ENCODE measurements at regions of chr9 and their contacts with region 1.

Region 1: DNA sequence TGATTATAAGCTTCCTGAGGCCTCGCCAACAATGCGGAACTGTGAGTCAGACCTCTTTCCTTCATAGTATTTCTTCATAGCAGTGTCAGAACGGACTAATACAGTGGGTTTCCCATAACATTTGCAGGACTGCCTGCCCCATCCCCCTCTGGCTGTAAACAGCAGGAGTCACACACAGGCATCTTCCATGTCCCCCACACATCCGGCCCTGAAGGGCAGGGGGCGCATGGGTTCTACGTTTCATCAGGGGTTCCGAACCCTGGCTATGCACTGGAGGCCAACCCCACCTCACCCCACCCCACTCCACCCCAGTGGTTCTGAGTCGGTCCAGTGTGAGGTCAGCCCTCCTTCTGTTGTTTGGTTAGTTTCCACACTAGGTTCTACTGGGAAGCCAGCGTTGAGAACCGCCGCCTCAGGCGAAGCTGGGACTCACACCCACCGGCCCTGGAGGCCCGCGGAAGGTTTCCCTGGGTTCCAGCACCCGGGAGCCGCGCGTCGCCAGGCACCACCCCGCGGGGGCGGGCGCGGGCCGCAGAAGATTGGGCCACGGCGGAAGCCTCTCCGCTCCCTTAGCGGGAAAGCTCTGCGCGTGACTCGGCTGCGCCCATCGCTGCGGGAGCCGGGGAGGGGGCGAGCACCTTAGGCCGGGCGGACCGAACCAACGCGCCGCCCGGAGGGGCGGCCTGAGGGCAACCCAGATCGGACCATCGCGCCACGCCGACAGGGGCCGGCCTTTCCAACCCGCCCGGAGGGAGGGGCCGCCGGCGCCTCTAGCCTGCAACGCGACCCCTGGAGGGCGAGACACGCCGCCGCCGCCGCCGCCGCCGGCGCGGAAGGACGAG is at the start of gene RUSC2:
- DNase-seq: peak; percentile 84
- H3K4me3 ChIP-seq: peak within 1 kb of the TSS; percentile 89
- H3K27ac ChIP-seq: peak within 1 kb of the TSS; percentile 95
- H3K27me3 ChIP-seq: no peaks in the 10 kb centered on the region
- CTCF ChIP-seq: peak; percentile 53
- polyA plus RNA-seq, gene RUSC2: 17.4 and 19.3 TPM in 2 replicates

Region 2: DNA sequence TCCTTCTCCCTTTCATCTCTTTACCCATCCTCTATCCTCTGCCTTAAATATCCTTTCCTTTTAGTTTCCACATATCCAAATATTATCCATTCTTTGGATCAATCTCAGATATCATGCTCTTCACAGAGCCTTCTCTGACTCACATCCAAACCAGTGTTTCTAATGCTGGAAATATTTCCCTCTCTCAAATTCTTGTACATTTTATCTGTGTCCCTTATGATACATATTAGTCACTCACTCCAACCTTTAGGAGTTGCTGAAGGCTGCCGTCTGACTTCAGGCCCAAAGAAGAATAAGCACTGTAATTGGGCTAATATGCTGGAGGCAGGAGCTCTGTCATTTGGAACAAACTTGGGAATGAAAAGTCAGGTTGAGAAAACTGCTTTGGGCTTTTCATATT is 156.0 kb before region 1 on chr9:
- CTCF ChIA-PET with region 1: no interaction called
- POLR2A ChIA-PET with region 1: no interaction called
- DNase-seq: peak; percentile 41
- H3K4me3 ChIP-seq: no peak overlapping the region
- H3K27ac ChIP-seq: no peak overlapping the region
- H3K27me3 ChIP-seq: no peaks in the 10 kb centered on the region
- CTCF ChIP-seq: no peak

Region 3: DNA sequence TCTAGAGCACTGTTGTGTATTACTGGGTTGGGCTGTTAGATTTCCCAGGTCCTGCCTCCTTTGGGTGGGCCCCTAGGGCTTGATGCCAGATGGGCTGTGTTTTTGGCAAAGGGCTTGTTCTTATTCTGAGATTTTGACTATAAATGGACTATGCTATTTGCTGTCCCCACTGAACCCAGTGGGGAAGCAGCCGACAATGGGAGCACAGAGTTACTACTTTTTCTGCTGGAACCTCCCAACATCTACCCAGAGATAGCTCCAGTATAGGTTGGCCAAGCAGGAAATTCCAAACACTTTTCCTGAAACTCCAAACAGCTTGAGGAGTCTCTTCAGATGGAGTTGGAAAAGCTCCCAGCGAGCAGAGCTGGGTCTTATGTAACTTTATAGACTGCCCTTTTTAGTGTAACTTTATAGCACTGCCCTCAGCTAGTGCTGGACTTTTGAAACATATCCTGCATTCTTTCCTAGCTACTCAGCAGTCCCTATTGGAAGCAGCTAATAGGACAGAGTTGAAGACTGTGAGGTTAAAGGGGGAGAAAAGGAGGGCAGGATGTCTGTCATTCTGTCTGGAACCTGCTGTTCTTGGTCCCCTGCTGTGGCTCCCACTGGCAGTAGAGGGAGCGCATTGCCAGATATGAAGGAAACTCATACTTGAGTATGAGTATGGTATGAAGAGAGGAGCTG is 21.4 kb after region 1 on chr9:
- CTCF ChIA-PET with region 1: interaction called, 7 read pairs
- POLR2A ChIA-PET with region 1: interaction called, 10 read pairs
- DNase-seq: peak; percentile 91
- H3K4me3 ChIP-seq: peak overlapping the region; percentile 18
- H3K27ac ChIP-seq: peak overlapping the region; percentile 80
- H3K27me3 ChIP-seq: no peaks in the 10 kb centered on the region
- CTCF ChIP-seq: peak; percentile 22; the same call in 1 of the 2 replicates

Region 4: DNA sequence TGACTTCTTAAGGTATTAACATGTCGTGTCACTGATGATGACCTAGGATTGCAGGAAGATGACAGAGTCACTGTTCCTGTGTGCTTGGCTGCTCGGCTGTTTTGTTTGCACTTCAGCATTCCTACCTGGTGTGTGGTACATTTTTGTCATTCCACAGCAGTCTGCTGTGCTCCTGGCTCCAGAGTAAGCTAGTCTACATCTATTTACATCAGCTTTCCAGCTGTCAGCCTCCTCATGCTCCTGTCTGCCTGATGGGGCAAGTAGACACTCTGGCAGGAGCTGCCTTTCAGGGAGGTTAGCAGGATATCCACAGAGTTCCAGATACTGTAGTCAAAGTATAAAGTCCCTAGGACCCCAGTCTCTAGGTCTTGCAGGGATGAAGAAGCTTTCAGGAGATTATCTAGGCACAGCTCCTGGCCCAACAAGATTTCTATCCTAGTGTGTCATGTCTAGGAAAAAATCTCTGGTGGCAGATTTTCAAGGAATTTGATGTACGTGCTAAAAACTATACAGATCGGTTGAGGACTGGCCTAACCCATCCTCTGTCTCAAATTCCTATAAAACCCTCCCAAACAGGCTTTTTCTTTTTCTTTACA is 28.8 kb after region 1 on chr9:
- CTCF ChIA-PET with region 1: interaction called, 3 read pairs
- POLR2A ChIA-PET with region 1: interaction called, 14 read pairs
- DNase-seq: peak; percentile 88
- H3K4me3 ChIP-seq: no peak overlapping the region
- H3K27ac ChIP-seq: peak overlapping the region; percentile 92
- H3K27me3 ChIP-seq: no peaks in the 10 kb centered on the region
- CTCF ChIP-seq: no peak

Region 5: GRCh38 chr9:35529161-35529823 is 39.8 kb after region 1 on chr9:
- CTCF ChIA-PET with region 1: interaction called, 12 read pairs
- POLR2A ChIA-PET with region 1: no interaction called
- DNase-seq: no peak
- H3K4me3 ChIP-seq: no peak overlapping the region
- H3K27ac ChIP-seq: no peak overlapping the region
- H3K27me3 ChIP-seq: no peaks in the 10 kb centered on the region
- CTCF ChIP-seq: no peak

Region 6: GRCh38 chr9:35538361-35539234 is 49.1 kb after region 1 on chr9:
- CTCF ChIA-PET with region 1: interaction called, 10 read pairs
- POLR2A ChIA-PET with region 1: interaction called, 13 read pairs
- DNase-seq: no peak
- H3K4me3 ChIP-seq: peak overlapping the region; percentile 77
- H3K27ac ChIP-seq: peak overlapping the region; percentile 95
- H3K27me3 ChIP-seq: no peaks in the 10 kb centered on the region
- CTCF ChIP-seq: no peak

Region 7: GRCh38 chr9:35835216-35835632 is 345.7 kb after region 1 on chr9:
- CTCF ChIA-PET with region 1: no interaction called
- POLR2A ChIA-PET with region 1: no interaction called
- DNase-seq: no peak
- H3K4me3 ChIP-seq: no peak overlapping the region
- H3K27ac ChIP-seq: no peak overlapping the region
- H3K27me3 ChIP-seq: no peaks in the 10 kb centered on the region
- CTCF ChIP-seq: peak; percentile 23

Measured in AG04450 (cell line).